GM10248 (cell line): ENCODE measurements at regions of chr2 and their contacts with region 1.

Region 1: GRCh38 chr2:102736410-102737409 is 25.1 kb upstream of the TMEM182 start:
- DNase-seq: peak; percentile 94
- CTCF ChIP-seq: no peak

Region 2: DNA sequence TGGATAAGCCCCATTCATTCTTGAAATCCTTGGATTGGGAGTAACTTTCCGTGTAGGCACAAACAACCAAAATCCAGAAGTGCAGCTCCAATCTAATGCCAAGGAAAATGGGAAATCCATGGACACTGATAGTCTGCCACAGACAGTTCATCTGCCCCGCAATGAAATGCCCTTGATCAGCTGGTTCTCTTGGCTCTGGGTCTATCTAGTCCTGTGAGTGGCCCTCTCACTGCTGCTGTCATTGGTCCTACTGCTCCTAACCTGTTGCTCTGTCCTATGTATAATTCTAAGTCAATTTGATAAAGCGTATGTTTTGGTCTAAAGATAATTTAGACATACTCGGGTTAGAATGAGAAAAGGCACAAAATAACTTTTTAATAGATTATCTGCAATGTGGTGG is 11.4 kb after region 1 on chr2:
- CTCF ChIA-PET with region 1: interaction called, 122 read pairs
- POLR2A ChIA-PET with region 1: no interaction called
- DNase-seq: no peak
- CTCF ChIP-seq: no peak